Heart right ventricle (tissue), 16 donors: ENCODE measurements at regions of chr13 and their contacts with region 1.

Region 1: DNA sequence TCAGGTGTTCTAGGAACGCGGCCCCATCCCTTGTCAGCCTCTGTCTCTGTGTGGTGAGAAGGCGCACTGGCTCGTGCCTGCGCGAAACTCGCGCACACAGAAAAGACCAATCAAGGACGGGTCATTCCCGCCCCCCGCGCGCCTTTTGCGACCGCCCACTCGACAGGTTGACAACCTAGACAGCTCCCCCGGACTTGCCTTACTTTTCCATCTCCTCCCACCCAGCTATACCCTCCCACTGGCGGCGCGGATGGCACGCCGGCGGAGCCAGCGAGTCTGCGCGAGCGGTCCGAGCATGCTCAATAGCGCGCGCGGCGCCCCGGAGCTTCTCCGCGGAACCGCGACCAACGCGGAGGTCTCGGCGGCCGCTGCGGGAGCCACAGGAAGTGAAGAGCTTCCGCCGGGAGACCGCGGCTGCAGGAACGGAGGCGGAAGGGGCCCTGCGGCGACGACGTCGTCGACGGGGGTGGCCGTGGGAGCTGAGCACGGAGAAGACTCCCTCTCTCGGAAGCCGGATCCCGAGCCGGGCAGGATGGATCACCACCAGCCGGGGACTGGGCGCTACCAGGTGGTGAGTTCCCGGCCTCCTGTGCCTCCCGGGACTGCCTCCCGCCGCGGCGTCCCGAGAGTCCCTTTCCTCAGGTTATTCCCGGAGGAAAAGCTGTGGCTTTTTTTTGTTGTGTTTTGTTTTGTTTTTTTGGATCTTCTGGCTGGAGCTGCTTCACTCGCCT is at the start of gene NDFIP2:
- DNase-seq: peak; percentile 83 to 91
- ATAC-seq: peak; percentile 94 to 96 (median 95)
- H3K4me3 ChIP-seq: peak within 1 kb of the TSS; percentile 67 to 94 (median 80)
- H3K27ac ChIP-seq: peak within 1 kb of the TSS in 9 of 10 donors; percentile 71 to 87 (median 80)
- H3K4me1 ChIP-seq: peaks cover 0 to 42% (median 20%) of the 10 kb centered on the region in 9 donors
- H3K27me3 ChIP-seq: peaks cover 0 to 58% (median 0%) of the 10 kb centered on the region in 7 donors
- CTCF ChIP-seq: peak in 1 of 9 donors; percentile 13
- total RNA-seq, gene NDFIP2: 27.9 to 42.7 (median 34.0) TPM

Region 2: DNA sequence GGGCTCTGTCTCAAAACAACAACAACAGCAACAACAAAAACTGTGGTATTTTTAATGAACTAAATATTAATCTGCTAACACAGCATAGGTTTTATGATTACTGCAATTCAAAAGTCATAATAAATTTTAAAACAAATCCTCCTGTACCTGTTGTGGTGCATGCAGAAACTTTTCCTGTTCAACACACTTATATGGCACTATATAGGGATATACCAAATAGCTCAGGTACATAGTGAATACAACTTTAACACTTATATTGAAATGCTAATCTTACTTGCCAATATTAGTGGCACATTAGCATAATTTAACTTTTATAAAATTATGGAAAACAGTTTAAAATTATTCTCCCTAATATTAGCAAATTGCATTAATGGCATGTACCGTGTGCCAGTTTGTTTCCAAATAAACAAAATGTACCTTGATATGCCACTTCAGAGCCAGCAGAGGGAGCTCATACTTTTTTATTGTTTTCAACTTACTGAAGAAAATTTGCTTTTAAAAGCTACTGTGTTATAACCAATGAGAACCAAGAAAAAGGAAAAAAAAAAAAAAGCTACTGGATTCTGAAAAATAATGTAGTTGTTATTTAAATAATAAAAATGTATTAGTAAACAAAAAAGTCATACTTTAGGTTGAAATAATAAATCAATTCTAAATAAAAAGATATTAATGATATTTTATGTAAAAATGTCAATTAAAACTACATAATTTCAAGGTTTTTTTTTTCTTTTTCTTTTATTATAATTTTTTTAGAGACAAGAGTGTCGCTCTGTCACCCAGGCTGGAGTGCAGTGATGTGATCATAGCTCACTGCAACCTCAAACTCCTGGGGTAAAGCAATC is 57.1 kb before region 1 on chr13:
- intact Hi-C with region 1: loop called in 3 of 10 experiments (anchors 5 to 10 kb)
- DNase-seq: no peak
- ATAC-seq: peak in 2 of 8 donors; percentile 49 to 58
- H3K4me3 ChIP-seq: no peak overlapping the region
- H3K27ac ChIP-seq: no peak overlapping the region
- H3K4me1 ChIP-seq: no peaks in the 10 kb centered on the region
- H3K27me3 ChIP-seq: no peaks in the 10 kb centered on the region
- CTCF ChIP-seq: peak; percentile 48 to 81 (median 71)

Region 3: DNA sequence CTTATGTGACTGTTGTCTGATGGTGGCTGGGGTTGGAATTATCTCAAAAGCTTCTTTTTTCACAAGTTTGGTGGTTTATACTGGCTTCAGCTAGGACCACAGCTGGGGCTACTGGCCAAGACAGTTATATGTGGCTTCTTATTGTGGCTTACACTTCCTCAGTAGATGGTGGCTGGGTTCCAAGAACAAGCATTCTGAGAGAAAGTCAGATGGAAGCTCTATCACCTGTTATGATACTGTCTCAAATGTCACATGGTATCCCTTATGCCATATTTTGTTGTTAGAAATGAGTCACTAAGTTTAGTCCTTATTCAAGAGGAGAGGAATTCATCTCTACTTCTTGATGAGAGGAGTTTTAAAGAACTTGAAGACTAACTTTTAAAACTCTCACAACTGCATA is 41.5 kb after region 1 on chr13:
- intact Hi-C with region 1: loop called in 4 of 10 experiments (anchors 2 to 5 kb)
- DNase-seq: no peak
- ATAC-seq: no peak
- H3K4me3 ChIP-seq: no peak overlapping the region
- H3K27ac ChIP-seq: peak overlapping the region in 1 of 10 donors; percentile 22
- H3K4me1 ChIP-seq: peaks cover 0 to 28% (median 13%) of the 10 kb centered on the region in 9 donors
- H3K27me3 ChIP-seq: no peaks in the 10 kb centered on the region
- CTCF ChIP-seq: no peak

Region 4: DNA sequence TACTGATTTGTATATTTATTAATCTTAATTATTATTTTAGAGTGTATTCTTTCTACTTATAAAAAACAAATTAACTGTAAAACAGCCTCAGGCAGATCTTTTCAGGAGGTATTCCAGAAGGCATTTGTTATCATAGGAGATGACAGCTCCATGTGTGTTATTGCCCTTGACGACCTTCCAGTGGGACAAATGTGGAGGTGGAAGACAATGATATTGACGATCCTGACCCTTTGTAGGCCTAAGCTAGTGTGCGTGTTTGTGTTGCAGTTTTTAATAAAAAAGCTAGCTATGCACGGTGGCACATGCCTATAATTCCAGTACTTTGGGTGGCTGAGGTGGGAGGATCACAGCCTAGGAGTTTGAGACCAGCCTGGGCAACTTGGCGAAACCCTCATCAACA is 46.6 kb after region 1 on chr13:
- intact Hi-C with region 1: loop called in 5 of 10 experiments (anchors 2 to 5 kb)
- DNase-seq: no peak
- ATAC-seq: peak in 3 of 8 donors; percentile 21 to 50 (median 32)
- H3K4me3 ChIP-seq: no peak overlapping the region
- H3K27ac ChIP-seq: no peak overlapping the region
- H3K4me1 ChIP-seq: peaks cover 0 to 26% (median 23%) of the 10 kb centered on the region in 9 donors
- H3K27me3 ChIP-seq: no peaks in the 10 kb centered on the region
- CTCF ChIP-seq: no peak

Region 5: GRCh38 chr13:79533781-79534400 is 52.8 kb after region 1 on chr13:
- intact Hi-C with region 1: loop called in 6 of 10 experiments (anchors 5 kb)
- DNase-seq: no peak
- ATAC-seq: no peak
- H3K4me3 ChIP-seq: no peak overlapping the region
- H3K27ac ChIP-seq: no peak overlapping the region
- H3K4me1 ChIP-seq: peaks cover 0 to 16% (median 5%) of the 10 kb centered on the region in 9 donors
- H3K27me3 ChIP-seq: no peaks in the 10 kb centered on the region
- CTCF ChIP-seq: no peak

Region 6: DNA sequence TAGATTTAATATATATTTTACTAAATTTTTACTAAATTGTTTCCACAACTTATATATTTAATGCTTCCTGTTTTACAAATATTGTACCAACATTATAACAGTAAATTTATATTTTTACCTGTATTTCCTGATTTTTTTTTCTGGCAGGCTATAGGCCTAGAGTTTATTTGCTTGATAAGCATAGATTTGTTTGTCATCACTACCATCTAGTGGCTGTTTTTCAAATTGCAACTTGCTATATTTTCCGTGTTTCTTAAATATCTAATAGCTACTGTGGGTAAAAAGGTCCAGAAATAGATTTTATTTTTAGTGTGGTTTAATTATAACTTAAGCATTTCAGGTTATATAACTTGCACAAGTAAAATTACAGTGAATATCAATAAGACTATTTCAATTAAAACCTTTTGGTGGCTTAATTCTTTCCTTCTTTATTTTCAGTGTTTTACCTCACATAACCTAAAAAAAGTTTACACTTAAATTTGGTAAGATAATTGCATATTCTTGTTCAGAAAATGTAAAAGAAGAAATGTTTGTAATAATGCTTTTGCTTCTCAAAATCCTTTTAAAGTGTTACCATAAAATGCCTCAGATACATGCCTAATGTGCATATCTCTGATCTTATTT is 60.4 kb after region 1 on chr13:
- intact Hi-C with region 1: loop called in 3 of 10 experiments (anchors 5 kb)
- DNase-seq: no peak
- ATAC-seq: peak in 1 of 8 donors; percentile 53
- H3K4me3 ChIP-seq: no peak overlapping the region
- H3K27ac ChIP-seq: no peak overlapping the region
- H3K4me1 ChIP-seq: no peaks in the 10 kb centered on the region
- H3K27me3 ChIP-seq: no peaks in the 10 kb centered on the region
- CTCF ChIP-seq: peak; percentile 73 to 94 (median 84)

Region 7: GRCh38 chr13:79679334-79679733 is 198.2 kb after region 1 on chr13:
- intact Hi-C with region 1: no loop called
- DNase-seq: peak; percentile 44 to 77
- ATAC-seq: peak; percentile 53 to 76 (median 63)
- H3K4me3 ChIP-seq: no peak overlapping the region
- H3K27ac ChIP-seq: no peak overlapping the region
- H3K4me1 ChIP-seq: peaks cover 0 to 17% (median 0%) of the 10 kb centered on the region in 9 donors
- H3K27me3 ChIP-seq: no peaks in the 10 kb centered on the region
- CTCF ChIP-seq: peak; percentile 56 to 85 (median 78)